RWPE1 (cell line): ENCODE measurements at regions of chr9 and their contacts with region 1.

Region 1: DNA sequence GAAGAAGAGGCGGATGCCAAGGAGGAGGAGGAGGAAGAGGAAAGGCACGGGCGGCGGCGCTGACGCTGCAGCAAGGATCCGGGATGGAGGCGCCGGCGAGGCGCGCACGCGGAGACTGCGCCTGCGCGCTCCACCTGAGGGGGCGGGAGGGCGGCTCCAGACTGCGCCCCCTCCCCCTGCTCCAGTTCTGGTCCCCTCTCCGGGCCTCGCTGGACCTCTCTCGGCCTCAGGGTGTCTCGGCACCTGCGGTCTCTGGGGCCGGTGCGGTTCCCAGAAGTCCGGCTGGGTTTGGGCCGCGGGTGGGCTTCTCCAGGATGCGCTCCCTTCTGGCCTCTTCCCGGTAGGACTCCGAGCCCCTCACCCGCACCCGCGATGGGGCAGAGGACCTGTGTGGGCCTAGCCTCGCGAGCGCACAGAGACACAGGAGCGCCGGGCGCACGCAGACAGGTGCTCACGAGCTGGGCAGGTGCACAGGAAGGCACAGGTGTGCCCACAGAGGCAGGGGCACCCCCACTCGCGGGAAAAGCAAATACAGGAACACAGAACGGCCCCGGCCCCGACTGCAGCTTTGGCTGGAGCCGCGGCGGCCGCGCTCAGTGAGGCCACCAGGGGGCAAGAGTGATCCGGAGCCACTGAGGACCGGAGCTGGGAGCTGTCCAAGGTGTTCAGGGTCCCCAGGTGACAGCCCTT is at the start of gene NPDC1:
- DNase-seq: peak; percentile 95
- H3K27ac ChIP-seq: peak within 1 kb of the TSS; percentile 48
- CTCF ChIP-seq: peak; percentile 99

Region 2: DNA sequence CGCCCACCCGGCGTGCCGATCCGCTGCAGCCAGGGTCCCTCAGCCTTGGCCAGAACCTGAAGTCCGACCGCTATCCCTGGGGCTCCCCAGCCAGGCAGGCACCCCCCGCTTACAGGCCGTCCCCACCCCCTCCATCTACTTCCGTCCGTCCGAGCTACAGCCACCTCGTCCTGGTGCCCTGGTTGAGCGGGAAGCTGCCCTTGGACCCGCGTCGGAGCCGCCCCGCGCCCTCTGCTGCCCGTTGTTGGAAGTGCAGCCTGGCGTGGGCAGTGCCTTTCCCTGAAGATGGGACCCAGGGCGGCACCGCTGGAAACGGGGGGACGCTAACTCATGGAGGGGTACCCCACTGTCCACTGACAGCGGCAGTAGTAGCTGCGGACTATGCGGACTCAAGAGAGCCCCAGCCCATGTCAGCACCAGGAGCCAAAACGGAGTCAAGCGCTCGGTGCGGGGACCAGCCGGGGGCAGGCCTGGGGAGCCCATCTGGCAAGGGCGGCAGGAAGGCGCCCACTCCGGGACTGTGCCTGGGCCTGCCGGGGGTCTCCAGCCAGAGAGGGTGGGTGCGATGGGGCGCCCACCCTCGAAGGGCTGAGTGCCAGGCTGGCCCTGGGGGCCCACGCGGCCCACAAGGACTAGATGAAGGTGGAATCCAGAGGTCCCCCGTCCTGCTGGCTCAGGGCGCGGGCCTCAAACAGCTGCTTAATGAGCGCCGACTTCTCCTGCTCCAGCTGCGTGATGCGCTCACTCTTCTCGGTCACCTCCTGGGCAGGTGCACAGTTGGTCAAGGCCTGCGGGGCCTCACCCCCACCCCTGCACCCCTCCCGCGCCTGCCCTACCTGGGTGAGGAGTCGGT is 18.0 kb after region 1 on chr9:
- CTCF ChIA-PET with region 1: interaction called, 76 read pairs
- POLR2A ChIA-PET with region 1: no interaction called
- DNase-seq: peak; percentile 71
- H3K27ac ChIP-seq: peak overlapping the region; percentile 85
- CTCF ChIP-seq: peak; percentile 100

Region 3: DNA sequence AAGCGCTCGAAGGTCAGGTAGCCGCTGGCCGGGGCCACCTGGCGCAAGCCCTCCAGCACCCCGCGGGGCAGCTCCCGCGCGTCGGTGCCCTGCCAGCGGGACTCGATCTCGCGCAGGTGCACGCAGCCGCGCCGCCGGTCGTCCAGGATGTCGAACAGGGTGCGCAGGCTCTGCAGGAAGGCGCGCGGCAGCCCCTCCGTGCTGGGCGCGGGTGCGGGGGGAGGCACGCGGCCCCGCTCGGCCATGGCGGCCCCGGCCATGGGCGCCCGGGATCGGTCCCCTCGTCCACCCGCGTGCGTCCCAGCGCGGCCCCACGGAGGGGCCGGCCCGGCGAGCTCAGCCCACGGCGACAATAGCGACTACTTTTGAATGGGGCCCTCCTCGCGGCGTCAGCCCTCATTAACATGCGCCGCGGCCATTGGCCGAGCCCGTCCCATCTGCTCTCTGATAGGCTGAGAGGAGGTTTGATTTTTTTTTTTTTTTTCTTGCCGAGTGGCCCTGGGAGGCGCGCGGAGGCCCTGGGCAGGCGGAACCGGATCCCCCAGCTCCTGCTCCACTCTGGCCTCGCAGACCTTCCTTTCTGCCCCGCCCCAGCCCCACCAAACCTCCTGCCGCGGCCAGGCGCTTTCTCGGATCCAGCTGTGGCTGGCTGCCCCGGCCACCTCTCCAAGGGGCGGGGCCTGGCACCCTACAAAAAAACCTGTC is 24.1 kb after region 1 on chr9 and contains the start of gene SAPCD2:
- CTCF ChIA-PET with region 1: interaction called, 76 read pairs
- POLR2A ChIA-PET with region 1: no interaction called
- DNase-seq: peak; percentile 96
- H3K27ac ChIP-seq: peak within 1 kb of the TSS; percentile 85
- CTCF ChIP-seq: no peak

Region 4: GRCh38 chr9:137077010-137077747 is 30.9 kb after region 1 on chr9 and contains the start of gene UAP1L1:
- CTCF ChIA-PET with region 1: interaction called, 12 read pairs
- POLR2A ChIA-PET with region 1: no interaction called
- DNase-seq: no peak
- H3K27ac ChIP-seq: peak within 1 kb of the TSS; percentile 97
- CTCF ChIP-seq: no peak

Region 5: GRCh38 chr9:137086531-137087408 is 40.5 kb after region 1 on chr9 and contains the start of gene MAN1B1:
- CTCF ChIA-PET with region 1: interaction called, 12 read pairs
- POLR2A ChIA-PET with region 1: interaction called, 4 read pairs
- DNase-seq: peak; percentile 100
- H3K27ac ChIP-seq: peak within 1 kb of the TSS; percentile 97
- CTCF ChIP-seq: no peak

Region 6: DNA sequence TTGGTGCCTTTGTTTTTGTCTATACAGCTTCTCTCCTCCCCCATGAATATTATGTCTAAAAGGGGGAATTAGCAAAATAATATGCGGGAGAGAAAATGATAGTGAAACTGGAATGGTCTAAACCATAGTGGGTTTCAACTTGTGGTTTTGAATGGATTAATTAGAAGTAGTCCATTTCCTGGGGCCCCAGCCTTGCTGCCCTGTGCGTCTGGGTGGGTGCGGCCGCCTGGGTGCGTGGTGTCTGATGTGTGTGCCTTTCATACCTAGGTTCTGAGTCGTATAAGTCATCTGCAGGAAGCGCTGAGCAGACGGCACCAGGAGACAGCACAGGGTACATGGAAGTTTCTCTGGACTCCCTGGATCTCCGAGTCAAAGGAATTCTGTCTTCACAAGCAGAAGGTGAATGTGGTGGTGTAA is 711.4 kb after region 1 on chr9:
- CTCF ChIA-PET with region 1: no interaction called
- POLR2A ChIA-PET with region 1: no interaction called
- DNase-seq: peak; percentile 57
- H3K27ac ChIP-seq: peak overlapping the region; percentile 71
- CTCF ChIP-seq: no peak